ENCODE measurements at regions of chr22 and their contacts with region 1.

Region 1: GRCh38 chr22:37676736-37677492 is 1.5 kb downstream of the LGALS1 start:
- DNase-seq: peak; percentile 93 to 97
- H3K4me3 ChIP-seq: peak overlapping the region; percentile 58 to 81
- H3K27ac ChIP-seq: peak overlapping the region; percentile 91 to 94
- H3K4me1 ChIP-seq: peaks cover 15 to 30% of the 10 kb centered on the region in 2 donors
- H3K27me3 ChIP-seq: no peaks in the 10 kb centered on the region
- CTCF ChIP-seq: no peak

Region 2: DNA sequence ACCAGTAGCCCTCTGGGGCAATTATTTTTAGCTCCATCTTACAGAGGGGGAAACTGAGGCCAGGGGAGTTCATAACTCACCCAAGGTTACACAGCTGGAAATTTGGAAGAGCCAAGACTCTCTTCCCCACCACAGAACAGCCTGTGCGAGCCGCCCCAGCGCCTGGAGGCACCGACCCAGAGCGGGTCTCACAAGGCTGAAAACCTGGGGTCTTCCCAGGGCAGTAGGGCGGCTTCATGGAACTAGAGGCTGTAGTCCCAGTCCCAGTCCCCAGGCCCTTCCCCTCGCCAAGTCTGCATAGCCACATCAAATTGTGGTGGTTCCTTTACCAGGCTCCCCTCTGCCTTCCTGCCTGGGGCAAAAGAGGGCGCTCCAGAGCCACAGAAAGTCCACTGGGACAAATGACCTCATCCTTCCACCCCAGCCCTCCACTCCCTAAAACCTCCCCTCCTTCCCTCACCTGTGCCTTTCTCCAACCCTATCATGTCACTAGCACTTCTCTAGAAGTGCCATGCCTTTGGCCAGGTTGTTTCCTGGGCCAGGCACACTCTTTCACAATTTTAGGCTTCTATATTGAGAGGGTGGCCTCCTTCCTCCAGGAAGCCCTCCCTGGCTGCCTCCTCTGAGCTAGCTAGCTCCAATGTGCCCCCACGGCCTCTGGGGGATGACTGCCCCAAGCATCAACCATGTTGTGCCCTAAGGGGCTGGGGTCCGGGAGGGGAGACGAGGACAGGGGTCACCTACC is 131.8 kb before region 1 on chr22:
- intact Hi-C with region 1: loop called (anchors 5 kb)
- DNase-seq: peak in 1 of 2 donors; percentile 83
- H3K4me3 ChIP-seq: peak overlapping the region; percentile 35 to 44
- H3K27ac ChIP-seq: peak overlapping the region; percentile 93 to 99
- H3K4me1 ChIP-seq: peaks cover 23 to 50% of the 10 kb centered on the region in 2 donors
- H3K27me3 ChIP-seq: no peaks in the 10 kb centered on the region
- CTCF ChIP-seq: peak; percentile 58 to 86 (median 77)

Region 3: GRCh38 chr22:37608477-37609239 is 68.3 kb before region 1 on chr22 and contains the start of gene GGA1:
- intact Hi-C with region 1: loop called (anchors 2 kb)
- DNase-seq: peak; percentile 94 to 97
- H3K4me3 ChIP-seq: peak within 1 kb of the TSS; percentile 79 to 81
- H3K27ac ChIP-seq: peak within 1 kb of the TSS; percentile 92 to 94
- H3K4me1 ChIP-seq: peaks cover 5 to 37% of the 10 kb centered on the region in 2 donors
- H3K27me3 ChIP-seq: no peaks in the 10 kb centered on the region
- CTCF ChIP-seq: peak in 1 of 3 experiments; percentile 13
- total RNA-seq, gene GGA1: 53.5 TPM

Region 4: GRCh38 chr22:37643225-37643847 is 33.6 kb before region 1 on chr22:
- intact Hi-C with region 1: loop called (anchors 1 kb)
- DNase-seq: peak in 1 of 2 donors; percentile 91
- H3K4me3 ChIP-seq: no peak overlapping the region
- H3K27ac ChIP-seq: no peak overlapping the region
- H3K4me1 ChIP-seq: peaks cover 6 to 17% of the 10 kb centered on the region in 2 donors
- H3K27me3 ChIP-seq: no peaks in the 10 kb centered on the region
- CTCF ChIP-seq: peak; percentile 91 to 93 (median 92)

Region 5: GRCh38 chr22:37807410-37808293 is 130.7 kb after region 1 on chr22 and contains the start of gene GCAT:
- intact Hi-C with region 1: loop called (anchors 1 kb)
- DNase-seq: peak; percentile 80 to 98
- H3K4me3 ChIP-seq: peak within 1 kb of the TSS; percentile 67 to 72
- H3K27ac ChIP-seq: peak within 1 kb of the TSS; percentile 83 to 89
- H3K4me1 ChIP-seq: peaks cover 6 to 17% of the 10 kb centered on the region in 2 donors
- H3K27me3 ChIP-seq: no peaks in the 10 kb centered on the region
- CTCF ChIP-seq: no peak
- total RNA-seq, gene GCAT: 4.5 TPM

Measured in ascending aorta (tissue), 2 donors.